Tibial artery (tissue), 4 donors: ENCODE measurements at regions of chr14 and their contacts with region 1.

Region 1: DNA sequence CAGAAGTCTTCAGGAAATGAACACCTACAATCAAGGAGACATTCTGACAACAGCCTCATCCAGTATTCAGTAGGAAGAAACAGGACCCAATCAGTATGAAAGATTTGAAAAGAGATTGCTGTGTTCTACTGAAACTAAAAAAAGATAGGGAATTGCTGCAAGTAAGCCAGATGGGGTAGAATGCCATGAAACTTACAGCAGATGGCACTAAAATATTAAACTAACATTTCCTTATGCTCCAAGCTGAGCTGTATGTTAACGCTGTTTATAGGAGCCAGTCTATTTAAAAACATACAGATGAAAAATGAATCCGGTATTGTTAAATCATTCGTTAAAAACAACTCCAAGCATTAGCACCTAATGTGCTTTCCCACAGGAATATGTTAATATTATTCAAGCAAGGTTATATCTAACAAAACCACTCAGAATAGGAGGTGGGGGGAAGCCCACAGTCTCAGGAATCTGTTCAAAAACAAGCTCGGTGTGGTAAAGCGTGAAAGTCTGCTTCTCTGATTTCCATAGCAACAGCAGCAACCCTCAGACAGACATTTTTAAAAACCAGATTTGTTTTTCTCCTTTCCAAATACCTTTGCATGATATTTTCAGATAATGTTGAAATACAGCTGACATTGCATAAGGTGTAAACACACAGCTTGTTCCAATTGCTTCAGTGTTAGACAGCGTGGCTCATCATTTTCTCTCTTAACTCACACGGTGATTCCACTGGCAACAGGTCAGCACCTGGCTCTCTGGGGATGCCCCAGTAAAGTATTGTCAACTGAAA is 131.4 kb upstream of the CCDC175 start:
- DNase-seq: no peak
- H3K4me3 ChIP-seq: no peak overlapping the region
- H3K27ac ChIP-seq: peak overlapping the region; percentile 18 to 21
- H3K4me1 ChIP-seq: peaks cover 0 to 56% (median 11%) of the 10 kb centered on the region in 4 donors
- H3K27me3 ChIP-seq: no peaks in the 10 kb centered on the region
- CTCF ChIP-seq: peak; percentile 23 to 29

Region 2: DNA sequence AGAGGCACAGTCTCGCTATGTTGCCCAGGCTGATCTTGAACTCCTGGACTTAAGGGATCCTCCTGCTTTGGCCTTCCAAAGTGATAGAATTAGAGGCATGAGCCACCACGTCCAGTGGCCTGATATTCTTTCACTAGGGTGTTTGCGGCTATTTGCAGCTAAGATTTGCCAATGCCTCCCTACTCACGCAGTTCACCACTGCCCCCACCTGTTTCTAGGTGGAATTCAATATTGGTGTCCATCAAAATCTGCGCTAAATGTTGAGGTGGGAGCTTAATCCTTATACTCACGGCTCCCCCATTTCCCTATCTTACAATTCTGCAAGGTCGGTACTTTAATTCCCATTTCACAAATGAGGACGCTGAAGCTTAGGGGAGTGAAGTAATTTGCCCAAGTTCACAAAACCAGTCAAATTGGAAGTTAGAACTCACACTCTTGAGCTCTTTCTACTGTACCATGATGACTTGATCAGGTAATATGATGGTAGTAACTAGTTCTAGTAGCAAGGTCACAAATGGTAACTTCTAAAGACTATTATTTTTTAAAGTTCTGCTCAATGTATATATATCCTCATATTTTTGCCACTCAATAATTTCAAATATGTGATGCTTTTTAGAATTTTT is 189.9 kb after region 1 on chr14:
- intact Hi-C with region 1: loop called (anchors 2 kb)
- DNase-seq: peak in 1 of 2 donors; percentile 45
- H3K4me3 ChIP-seq: no peak overlapping the region
- H3K27ac ChIP-seq: no peak overlapping the region
- H3K4me1 ChIP-seq: no peaks in the 10 kb centered on the region
- H3K27me3 ChIP-seq: no peaks in the 10 kb centered on the region
- CTCF ChIP-seq: peak; percentile 63 to 77

Region 3: DNA sequence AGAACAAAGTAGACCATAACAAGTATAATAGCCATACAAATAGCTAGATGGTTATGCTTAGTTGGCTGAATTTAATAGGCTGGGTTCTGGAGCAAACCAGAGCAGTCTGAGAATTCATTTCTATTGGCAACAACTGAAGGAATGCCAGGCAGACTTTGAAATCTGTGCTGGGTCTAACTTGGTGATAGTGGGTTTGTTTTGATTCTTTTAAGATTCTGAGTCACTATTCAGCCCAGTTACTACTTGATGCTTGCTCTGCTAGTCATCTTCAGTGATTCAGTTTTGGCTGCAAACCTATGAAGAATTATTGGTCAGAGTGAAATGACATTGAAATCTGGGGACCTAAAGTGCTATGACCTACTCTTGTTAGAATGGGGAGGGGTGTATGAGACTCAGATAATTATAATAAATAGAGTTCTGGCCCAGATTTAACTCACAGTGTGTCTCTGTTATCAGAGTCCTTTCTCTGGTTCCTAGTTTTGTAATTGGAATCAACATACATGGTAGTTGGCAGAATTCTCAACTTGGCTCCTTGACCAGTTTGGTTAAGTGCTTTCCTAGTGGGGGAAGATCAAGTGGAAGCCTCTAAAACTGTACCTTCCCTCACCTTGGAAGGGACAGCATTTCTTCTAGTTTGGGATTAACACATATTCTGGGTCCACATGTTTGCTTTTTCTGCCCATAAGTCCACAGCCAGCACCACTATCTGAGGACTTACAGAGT is 1070.0 kb after region 1 on chr14:
- intact Hi-C with region 1: no loop called
- DNase-seq: no peak
- H3K4me3 ChIP-seq: no peak overlapping the region
- H3K27ac ChIP-seq: peak overlapping the region; percentile 36 to 56
- H3K4me1 ChIP-seq: peaks cover 0 to 31% (median 8%) of the 10 kb centered on the region in 4 donors
- H3K27me3 ChIP-seq: no peaks in the 10 kb centered on the region
- CTCF ChIP-seq: no peak